CD8-positive, alpha-beta T cell (primary cell): ENCODE measurements at regions of chr11 and their contacts with region 1.

Region 1: DNA sequence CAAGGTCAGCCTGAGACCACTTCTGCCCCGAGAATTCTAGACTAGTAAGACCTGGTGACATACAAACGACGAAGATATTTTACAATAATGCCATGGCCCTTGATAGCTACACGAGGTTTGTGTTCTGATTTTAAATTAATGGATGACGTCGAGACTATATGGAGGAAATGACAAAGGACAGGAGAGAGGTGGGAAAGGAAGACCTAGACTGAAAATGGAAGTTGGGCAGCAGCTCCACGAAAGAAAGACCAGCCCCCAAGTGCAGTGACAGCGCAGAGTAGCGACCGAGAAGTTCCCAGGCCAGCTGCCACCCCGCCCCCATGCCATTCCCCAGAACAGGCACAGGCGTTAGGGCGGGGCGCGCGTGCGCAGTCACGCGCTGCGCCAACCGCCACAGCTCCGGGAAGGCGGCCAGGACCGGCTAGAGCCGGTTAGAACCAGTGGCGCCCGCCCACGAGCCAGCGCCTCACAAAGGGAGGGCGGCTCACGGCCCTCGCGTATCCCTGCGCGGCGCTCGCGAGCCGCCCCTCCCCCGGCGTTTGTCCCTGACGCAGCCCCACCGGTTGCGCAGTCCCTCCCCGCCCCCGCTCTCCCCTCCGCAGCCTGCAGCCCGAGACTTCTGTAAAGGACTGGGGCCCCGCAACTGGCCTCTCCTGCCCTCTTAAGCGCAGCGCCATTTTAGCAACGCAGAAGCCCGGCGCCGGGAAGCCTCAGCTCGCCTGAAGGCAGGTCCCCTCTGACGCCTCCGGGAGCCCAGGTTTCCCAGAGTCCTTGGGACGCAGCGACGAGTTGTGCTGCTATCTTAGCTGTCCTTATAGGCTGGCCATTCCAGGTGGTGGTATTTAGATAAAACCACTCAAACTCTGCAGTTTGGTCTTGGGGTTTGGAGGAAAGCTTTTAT is 1.5 kb upstream of the MALAT1 start:
- DNase-seq: peak; percentile 95 to 99 (median 98)
- ATAC-seq: peak; percentile 80
- H3K4me3 ChIP-seq: peak overlapping the region; percentile 72 to 84
- H3K4me3 Mint-ChIP-seq: no peak overlapping the region
- H3K27ac ChIP-seq: peak overlapping the region; percentile 98 to 99
- H3K27ac Mint-ChIP-seq: no peak overlapping the region
- H3K4me1 ChIP-seq: peaks cover 13% of the 10 kb centered on the region
- H3K4me1 Mint-ChIP-seq: peaks cover 19% of the 10 kb centered on the region
- H3K27me3 ChIP-seq: no peaks in the 10 kb centered on the region
- H3K27me3 Mint-ChIP-seq: no peaks in the 10 kb centered on the region
- CTCF ChIP-seq: no peak

Region 2: GRCh38 chr11:65375012-65375411 is 122.4 kb before region 1 on chr11:
- CTCF ChIA-PET with region 1: interaction called, 5 read pairs
- POLR2A ChIA-PET with region 1: interaction called, 235 read pairs
- intact Hi-C with region 1: no loop called
- DNase-seq: no peak
- ATAC-seq: no peak
- H3K4me3 ChIP-seq: no peak overlapping the region
- H3K4me3 Mint-ChIP-seq: no peak overlapping the region
- H3K27ac ChIP-seq: no peak overlapping the region
- H3K27ac Mint-ChIP-seq: no peak overlapping the region
- H3K4me1 ChIP-seq: no peaks in the 10 kb centered on the region
- H3K4me1 Mint-ChIP-seq: no peaks in the 10 kb centered on the region
- H3K27me3 ChIP-seq: no peaks in the 10 kb centered on the region
- H3K27me3 Mint-ChIP-seq: no peaks in the 10 kb centered on the region
- CTCF ChIP-seq: no peak

Region 3: DNA sequence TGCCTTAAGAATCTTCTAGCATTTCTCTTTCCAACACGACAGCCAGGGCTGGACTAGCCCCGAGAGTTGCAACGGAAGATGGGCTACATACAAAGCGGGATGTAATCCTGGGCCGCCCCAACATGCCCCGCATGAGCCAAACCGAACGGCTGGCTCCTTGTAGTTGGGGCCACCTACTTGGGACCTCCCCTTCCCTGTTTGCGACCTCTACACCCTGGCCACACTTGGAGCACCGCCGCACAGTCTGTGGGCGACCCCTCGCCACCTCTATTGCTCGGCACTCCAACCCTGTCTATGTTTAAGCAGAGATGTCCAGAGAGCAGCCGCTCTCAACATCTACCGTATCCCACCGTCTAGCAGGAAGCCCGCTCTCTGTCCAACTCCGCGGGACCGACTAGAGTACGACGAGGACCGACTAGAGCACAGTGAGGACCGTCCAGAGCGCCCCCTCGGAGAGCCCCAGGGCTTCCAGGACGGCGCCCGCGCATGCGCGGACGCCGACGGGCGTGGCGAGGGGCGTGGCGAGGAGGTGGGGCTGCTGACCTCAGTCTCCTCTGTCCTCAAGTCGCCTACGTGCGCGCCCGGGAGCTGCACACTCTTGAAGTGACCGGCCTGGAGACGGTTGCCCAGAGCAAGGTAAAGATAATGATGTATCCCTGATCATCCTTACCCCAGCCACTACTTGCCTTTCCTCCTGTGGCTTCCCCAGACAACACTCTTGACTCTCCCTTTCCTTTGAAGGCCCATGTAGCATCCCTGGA is 42.5 kb before region 1 on chr11:
- CTCF ChIA-PET with region 1: interaction called, 3 read pairs
- POLR2A ChIA-PET with region 1: interaction called, 22 read pairs
- intact Hi-C with region 1: loop called in 1 of 2 experiments (anchors 1 kb)
- DNase-seq: peak; percentile 51 to 89 (median 82)
- ATAC-seq: peak; percentile 86
- H3K4me3 ChIP-seq: peak overlapping the region; percentile 74 to 87
- H3K4me3 Mint-ChIP-seq: peak overlapping the region; percentile 85
- H3K27ac ChIP-seq: peak overlapping the region; percentile 47 to 68
- H3K27ac Mint-ChIP-seq: peak overlapping the region; percentile 85
- H3K4me1 ChIP-seq: peaks cover 12% of the 10 kb centered on the region
- H3K4me1 Mint-ChIP-seq: peaks cover 23% of the 10 kb centered on the region
- H3K27me3 ChIP-seq: peaks cover 0 to under 1% of the 10 kb centered on the region in 2 experiments
- H3K27me3 Mint-ChIP-seq: no peaks in the 10 kb centered on the region
- CTCF ChIP-seq: no peak

Region 4: GRCh38 chr11:65524741-65525545 is 27.6 kb after region 1 on chr11 and contains the start of gene SCYL1:
- CTCF ChIA-PET with region 1: interaction called, 4 read pairs
- POLR2A ChIA-PET with region 1: interaction called, 68 read pairs
- intact Hi-C with region 1: loop called in 1 of 2 experiments (anchors 2 kb)
- DNase-seq: peak; percentile 77 to 92 (median 83)
- ATAC-seq: peak; percentile 93
- H3K4me3 ChIP-seq: peak within 1 kb of the TSS; percentile 73 to 89
- H3K4me3 Mint-ChIP-seq: peak within 1 kb of the TSS; percentile 84
- H3K27ac ChIP-seq: peak within 1 kb of the TSS; percentile 53 to 68
- H3K27ac Mint-ChIP-seq: peak within 1 kb of the TSS; percentile 91
- H3K4me1 ChIP-seq: peaks cover 60% of the 10 kb centered on the region
- H3K4me1 Mint-ChIP-seq: peaks cover 52% of the 10 kb centered on the region
- H3K27me3 ChIP-seq: no peaks in the 10 kb centered on the region
- H3K27me3 Mint-ChIP-seq: no peaks in the 10 kb centered on the region
- CTCF ChIP-seq: no peak
- total RNA-seq, gene SCYL1: 55.8 to 60.4 TPM

Region 5: DNA sequence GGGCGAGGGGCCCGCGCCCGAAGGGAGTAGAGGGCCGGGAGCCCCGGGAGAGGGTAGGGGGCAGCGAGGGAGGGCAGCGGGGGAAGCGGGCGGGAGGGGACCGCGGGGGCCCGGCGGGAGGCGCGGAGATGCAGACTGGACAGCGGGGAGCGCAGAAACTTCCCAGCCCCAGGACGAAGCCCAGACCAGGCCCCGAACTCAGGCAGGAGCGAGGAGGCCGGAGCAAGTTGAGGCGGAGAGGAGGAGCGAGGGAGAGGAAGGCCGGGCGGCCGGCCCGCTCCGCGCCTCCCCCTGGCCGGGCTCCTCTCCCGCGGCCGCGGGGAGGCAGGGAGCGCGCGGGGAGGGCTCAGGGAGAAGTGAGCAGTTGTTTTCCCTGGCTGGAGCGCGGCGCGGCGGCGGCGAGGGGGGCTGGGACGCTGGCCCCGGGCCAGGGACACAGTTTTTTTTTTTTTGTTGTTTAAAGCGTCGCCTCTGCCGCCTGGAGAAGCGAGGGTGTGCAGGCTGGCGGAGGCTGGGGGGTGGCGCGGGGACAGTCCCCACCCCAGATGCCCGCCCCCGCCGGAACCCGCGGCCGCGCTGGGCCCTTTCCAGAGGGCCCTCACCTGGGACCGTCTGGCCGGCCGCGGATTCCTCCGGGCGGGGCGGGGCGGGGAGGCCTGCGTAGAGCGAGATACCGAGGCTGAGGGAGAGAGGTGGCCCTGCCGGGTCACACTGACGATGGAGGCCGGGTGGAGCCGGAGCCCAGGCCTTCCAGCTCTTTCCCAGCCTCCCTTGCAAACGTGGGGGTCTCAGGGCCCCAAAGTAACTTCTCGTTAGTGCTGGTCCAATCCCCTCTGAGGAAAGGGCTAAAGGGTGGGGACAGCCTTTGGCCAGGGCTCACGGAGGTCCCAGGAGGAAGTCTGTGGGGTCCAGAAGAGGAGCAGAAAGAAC is 60.9 kb after region 1 on chr11 and contains the start of gene LTBP3:
- CTCF ChIA-PET with region 1: no interaction called
- POLR2A ChIA-PET with region 1: interaction called, 12 read pairs
- intact Hi-C with region 1: no loop called
- DNase-seq: peak in 5 of 9 experiments; percentile 29 to 70 (median 66)
- ATAC-seq: peak; percentile 38
- H3K4me3 ChIP-seq: peak within 1 kb of the TSS; percentile 54 to 61
- H3K4me3 Mint-ChIP-seq: peak within 1 kb of the TSS; percentile 89
- H3K27ac ChIP-seq: peak within 1 kb of the TSS; percentile 60 to 79
- H3K27ac Mint-ChIP-seq: peak within 1 kb of the TSS; percentile 89
- H3K4me1 ChIP-seq: peaks cover 61% of the 10 kb centered on the region
- H3K4me1 Mint-ChIP-seq: peaks cover 56% of the 10 kb centered on the region
- H3K27me3 ChIP-seq: no peaks in the 10 kb centered on the region
- H3K27me3 Mint-ChIP-seq: no peaks in the 10 kb centered on the region
- CTCF ChIP-seq: no peak
- total RNA-seq, gene LTBP3: 231 to 246 TPM

Region 6: GRCh38 chr11:65604258-65604657 is 106.9 kb after region 1 on chr11:
- CTCF ChIA-PET with region 1: no interaction called
- POLR2A ChIA-PET with region 1: no interaction called
- intact Hi-C with region 1: no loop called
- DNase-seq: no peak
- ATAC-seq: no peak
- H3K4me3 ChIP-seq: no peak overlapping the region
- H3K4me3 Mint-ChIP-seq: no peak overlapping the region
- H3K27ac ChIP-seq: no peak overlapping the region
- H3K27ac Mint-ChIP-seq: no peak overlapping the region
- H3K4me1 ChIP-seq: no peaks in the 10 kb centered on the region
- H3K4me1 Mint-ChIP-seq: peaks cover 6% of the 10 kb centered on the region
- H3K27me3 ChIP-seq: no peaks in the 10 kb centered on the region
- H3K27me3 Mint-ChIP-seq: no peaks in the 10 kb centered on the region
- CTCF ChIP-seq: no peak

Region 7: DNA sequence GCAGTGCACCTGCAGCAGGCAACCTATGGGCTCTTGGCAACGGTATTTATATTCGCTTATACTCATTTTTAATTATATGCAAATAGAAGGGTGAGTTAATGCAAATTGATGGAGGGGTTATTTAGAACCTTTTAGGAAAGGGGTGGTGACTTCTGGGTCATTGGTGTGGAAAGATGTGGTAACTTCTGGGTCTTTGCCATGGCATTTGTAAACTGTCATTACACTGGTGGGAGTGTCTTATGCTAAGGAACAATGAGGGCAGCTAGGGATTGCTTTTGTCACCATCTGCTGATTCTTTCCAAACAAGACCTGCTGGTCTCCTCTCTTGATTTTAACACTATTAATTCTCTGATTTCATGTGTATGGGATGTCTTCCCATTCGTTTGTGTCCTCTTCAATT is 203.0 kb after region 1 on chr11:
- CTCF ChIA-PET with region 1: no interaction called
- POLR2A ChIA-PET with region 1: no interaction called
- intact Hi-C with region 1: no loop called
- DNase-seq: no peak
- ATAC-seq: no peak
- H3K4me3 ChIP-seq: no peak overlapping the region
- H3K4me3 Mint-ChIP-seq: no peak overlapping the region
- H3K27ac ChIP-seq: no peak overlapping the region
- H3K27ac Mint-ChIP-seq: no peak overlapping the region
- H3K4me1 ChIP-seq: no peaks in the 10 kb centered on the region
- H3K4me1 Mint-ChIP-seq: no peaks in the 10 kb centered on the region
- H3K27me3 ChIP-seq: no peaks in the 10 kb centered on the region
- H3K27me3 Mint-ChIP-seq: peaks cover 2% of the 10 kb centered on the region
- CTCF ChIP-seq: no peak

Region 8: GRCh38 chr11:65888163-65888814 is 390.9 kb after region 1 on chr11 and contains the start of gene FIBP:
- CTCF ChIA-PET with region 1: no interaction called
- POLR2A ChIA-PET with region 1: interaction called, 13 read pairs
- intact Hi-C with region 1: no loop called
- DNase-seq: peak; percentile 89 to 98 (median 95)
- ATAC-seq: peak; percentile 57
- H3K4me3 ChIP-seq: peak within 1 kb of the TSS; percentile 57 to 87
- H3K4me3 Mint-ChIP-seq: peak within 1 kb of the TSS; percentile 83
- H3K27ac ChIP-seq: peak within 1 kb of the TSS; percentile 73 to 97
- H3K27ac Mint-ChIP-seq: peak within 1 kb of the TSS; percentile 98
- H3K4me1 ChIP-seq: peaks cover 48% of the 10 kb centered on the region
- H3K4me1 Mint-ChIP-seq: peaks cover 62% of the 10 kb centered on the region
- H3K27me3 ChIP-seq: no peaks in the 10 kb centered on the region
- H3K27me3 Mint-ChIP-seq: no peaks in the 10 kb centered on the region
- CTCF ChIP-seq: peak; percentile 71
- total RNA-seq, gene FIBP: 16.5 to 19.3 TPM

Region 9: DNA sequence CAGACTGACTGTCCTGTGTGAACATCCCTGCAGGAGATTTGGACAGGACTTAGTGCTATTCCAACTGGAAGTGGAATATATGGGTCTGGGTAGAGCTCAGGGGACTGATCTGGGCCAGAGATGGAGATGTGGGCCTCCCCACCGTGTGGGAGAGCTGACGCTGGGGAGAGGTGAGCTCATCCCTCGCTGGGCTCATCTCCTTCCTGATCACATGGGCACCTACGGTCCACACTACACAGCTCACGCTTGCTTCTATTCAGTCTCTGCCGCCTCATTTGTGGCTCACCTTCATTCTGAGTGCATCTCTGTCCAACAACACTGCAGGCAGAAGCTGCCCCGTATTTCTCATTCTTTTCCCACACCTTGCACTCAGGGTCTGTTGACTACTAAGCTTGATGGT is 754.4 kb after region 1 on chr11:
- CTCF ChIA-PET with region 1: no interaction called
- POLR2A ChIA-PET with region 1: no interaction called
- intact Hi-C with region 1: no loop called
- DNase-seq: no peak
- ATAC-seq: no peak
- H3K4me3 ChIP-seq: no peak overlapping the region
- H3K4me3 Mint-ChIP-seq: no peak overlapping the region
- H3K27ac ChIP-seq: no peak overlapping the region
- H3K27ac Mint-ChIP-seq: peak overlapping the region; percentile 73
- H3K4me1 ChIP-seq: peaks cover 15% of the 10 kb centered on the region
- H3K4me1 Mint-ChIP-seq: peaks cover 10% of the 10 kb centered on the region
- H3K27me3 ChIP-seq: no peaks in the 10 kb centered on the region
- H3K27me3 Mint-ChIP-seq: no peaks in the 10 kb centered on the region
- CTCF ChIP-seq: no peak